BJ (cell line): ENCODE measurements at regions of chr10 and their contacts with region 1.

Region 1: DNA sequence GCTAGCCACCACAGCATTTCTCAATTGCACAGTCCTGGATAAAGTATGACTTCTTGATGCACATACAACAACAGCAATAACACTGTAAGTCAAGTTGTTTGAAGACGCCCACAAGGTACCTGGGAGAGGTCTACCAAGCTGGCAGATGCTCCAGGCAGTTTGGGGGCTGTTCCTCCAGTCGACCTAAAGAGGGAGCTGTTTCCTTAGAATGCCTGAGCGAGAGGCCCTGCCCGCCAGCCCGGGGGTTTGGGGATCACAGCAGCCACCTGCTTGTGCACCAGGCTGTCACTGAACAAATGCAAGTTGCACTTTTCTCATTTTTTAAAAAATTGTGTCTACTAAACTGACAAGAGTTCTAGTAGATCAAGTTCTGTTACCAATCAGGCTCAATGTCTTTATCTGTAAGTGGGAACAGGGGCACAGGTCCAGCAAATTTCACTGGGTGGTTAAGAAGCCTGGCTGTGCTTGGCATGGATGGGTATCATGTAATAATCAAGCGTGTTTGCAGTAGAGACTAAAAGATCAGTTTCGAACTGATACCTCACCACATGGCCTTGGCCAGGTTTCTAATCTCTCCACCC is 193.8 kb upstream of the ADO start:
- DNase-seq: no peak
- H3K4me3 ChIP-seq: no peak overlapping the region
- H3K27me3 ChIP-seq: no peaks in the 10 kb centered on the region
- CTCF ChIP-seq: peak; percentile 84

Region 2: DNA sequence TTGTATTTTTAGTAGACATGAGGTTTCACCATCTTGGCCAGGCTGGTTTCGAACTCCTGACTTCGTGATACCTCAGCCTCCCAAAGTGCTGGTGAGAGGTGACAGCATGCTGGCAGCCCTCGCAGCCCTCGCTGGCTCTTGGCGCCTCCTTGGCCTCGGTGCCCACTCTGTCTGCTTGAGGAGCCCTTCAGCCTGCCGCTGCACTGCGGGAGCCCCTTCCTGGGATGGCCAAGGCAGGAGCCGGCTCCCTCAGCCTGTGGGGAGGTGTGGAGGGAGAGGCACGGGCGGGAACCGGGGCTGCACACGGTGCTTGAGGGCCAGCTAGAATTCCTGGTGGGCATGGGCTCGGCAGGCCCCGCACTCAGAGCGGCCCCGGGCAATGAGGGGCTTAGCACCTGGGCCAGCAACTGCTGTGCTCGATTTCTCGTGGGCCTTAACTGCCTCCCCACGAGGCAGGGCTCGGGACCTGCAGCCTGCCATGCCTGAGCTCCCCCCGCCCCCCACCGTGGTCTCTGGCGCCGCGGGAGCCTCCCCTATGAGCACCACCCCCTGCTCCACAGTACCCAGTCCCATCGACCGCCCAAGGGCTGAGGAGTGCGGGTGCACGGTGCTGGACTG is 1570.2 kb before region 1 on chr10:
- CTCF ChIA-PET with region 1: no interaction called
- POLR2A ChIA-PET with region 1: no interaction called
- DNase-seq: no peak
- H3K4me3 ChIP-seq: no peak overlapping the region
- H3K27me3 ChIP-seq: peaks cover 4% of the 10 kb centered on the region
- CTCF ChIP-seq: no peak

Region 3: DNA sequence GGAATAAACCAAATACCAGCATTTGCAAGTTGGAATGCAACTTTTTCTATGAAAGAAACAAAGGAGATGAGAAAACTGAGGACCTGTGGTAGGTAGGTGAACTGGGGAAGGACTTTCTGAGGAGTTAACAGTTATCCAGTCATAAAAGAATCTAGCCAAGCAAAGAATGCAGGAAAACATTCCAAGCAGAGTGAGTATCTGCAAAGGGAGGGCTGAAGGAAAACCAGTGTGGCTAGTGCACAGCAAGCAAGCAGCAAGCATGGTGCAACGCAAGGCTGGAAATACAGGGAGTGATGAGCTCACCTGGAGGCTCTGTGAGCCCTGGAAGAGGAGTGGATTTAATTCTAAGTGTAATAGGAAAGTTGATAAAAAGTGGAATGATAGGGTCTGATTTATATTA is 386.1 kb before region 1 on chr10:
- CTCF ChIA-PET with region 1: no interaction called
- POLR2A ChIA-PET with region 1: no interaction called
- DNase-seq: no peak
- H3K4me3 ChIP-seq: no peak overlapping the region
- H3K27me3 ChIP-seq: no peaks in the 10 kb centered on the region
- CTCF ChIP-seq: no peak

Region 4: GRCh38 chr10:62594093-62594520 is 16.6 kb before region 1 on chr10:
- CTCF ChIA-PET with region 1: interaction called, 29 read pairs
- POLR2A ChIA-PET with region 1: no interaction called
- DNase-seq: no peak
- H3K4me3 ChIP-seq: no peak overlapping the region
- H3K27me3 ChIP-seq: no peaks in the 10 kb centered on the region
- CTCF ChIP-seq: peak; percentile 94

Region 5: GRCh38 chr10:62788861-62789467 is 178.2 kb after region 1 on chr10:
- CTCF ChIA-PET with region 1: interaction called, 11 read pairs
- POLR2A ChIA-PET with region 1: no interaction called
- DNase-seq: no peak
- H3K4me3 ChIP-seq: no peak overlapping the region
- H3K27me3 ChIP-seq: no peaks in the 10 kb centered on the region
- CTCF ChIP-seq: no peak

Region 6: DNA sequence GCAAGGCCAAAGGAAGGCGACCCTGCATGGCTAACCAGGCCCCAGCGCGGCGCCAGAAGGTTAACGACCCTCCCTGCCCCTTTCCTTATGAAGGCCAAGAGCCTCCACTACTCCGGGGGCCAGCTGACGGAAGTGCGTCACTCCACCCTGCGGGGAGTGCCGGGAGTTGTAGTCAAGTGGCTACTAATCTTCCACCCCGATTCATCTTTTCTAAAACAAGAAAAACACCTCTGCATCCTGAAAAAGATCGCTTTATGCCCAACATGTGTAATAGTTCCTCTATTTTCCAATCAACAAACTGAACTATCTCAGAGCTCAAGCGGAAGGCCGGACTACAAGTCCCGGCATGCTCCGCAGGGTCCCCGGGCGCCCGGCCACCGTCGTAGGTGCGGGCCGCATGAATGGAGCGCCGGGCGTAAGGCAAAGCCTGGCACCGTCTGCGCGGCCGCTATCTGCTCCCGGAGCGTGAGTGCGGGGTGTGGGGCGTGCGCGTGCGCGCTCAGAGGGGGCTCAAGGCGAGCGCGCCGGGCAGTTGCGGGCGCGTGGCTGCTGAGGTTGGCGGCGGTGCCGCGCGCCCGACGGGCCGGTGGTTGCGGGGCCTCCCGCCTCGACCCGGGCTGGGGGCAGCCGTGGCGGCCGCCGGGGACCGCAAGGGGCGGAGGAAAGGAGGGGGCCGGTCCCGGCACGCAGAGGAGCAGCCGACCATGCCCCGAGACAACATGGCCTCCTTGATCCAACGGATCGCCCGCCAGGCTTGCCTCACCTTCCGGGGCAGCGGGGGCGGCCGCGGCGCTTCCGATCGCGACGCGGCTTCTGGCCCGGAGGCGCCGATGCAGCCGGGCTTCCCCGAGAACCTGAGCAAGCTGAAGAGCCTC is 193.9 kb after region 1 on chr10 and contains the start of gene ADO:
- CTCF ChIA-PET with region 1: interaction called, 15 read pairs
- POLR2A ChIA-PET with region 1: no interaction called
- DNase-seq: no peak
- H3K4me3 ChIP-seq: peak within 1 kb of the TSS; percentile 91
- H3K27me3 ChIP-seq: peaks cover 2% of the 10 kb centered on the region; the same call in 1 of the 2 replicates
- CTCF ChIP-seq: no peak
- polyA plus RNA-seq, gene ADO: 7.8 and 15.3 TPM in 2 replicates

Region 7: GRCh38 chr10:62816331-62817120 is 205.8 kb after region 1 on chr10 and contains the start of gene EGR2:
- CTCF ChIA-PET with region 1: interaction called, 65 read pairs
- POLR2A ChIA-PET with region 1: no interaction called
- DNase-seq: peak; percentile 66
- H3K4me3 ChIP-seq: peak within 1 kb of the TSS; percentile 59
- H3K27me3 ChIP-seq: peaks cover 20% of the 10 kb centered on the region
- CTCF ChIP-seq: no peak
- polyA plus RNA-seq, gene EGR2: 1.1 and 1.9 TPM in 2 replicates

Region 8: GRCh38 chr10:63083904-63084689 is 473.4 kb after region 1 on chr10:
- CTCF ChIA-PET with region 1: interaction called, 15 read pairs
- POLR2A ChIA-PET with region 1: no interaction called
- DNase-seq: peak; percentile 34
- H3K4me3 ChIP-seq: no peak overlapping the region
- H3K27me3 ChIP-seq: no peaks in the 10 kb centered on the region
- CTCF ChIP-seq: peak; percentile 64